Activated T-helper 2 cell treated with anti-CD3 and anti-CD28 coated beads, Interferon-gamma antibody, Interleukin-2, Interleukin-4, amounts not matched to agents 10 μg/mL and 5 μg/mL and 100 μg/mL, durations not matched to agents 14 hours and 24 hours and 36 hours (primary cell): ENCODE measurements at regions of chr16 and their contacts with region 1.

Region 1: GRCh38 chr16:25014500-25015147 is 545 bp downstream of the ARHGAP17 start:
- DNase-seq: no peak
- H3K4me3 Mint-ChIP-seq: peak overlapping the region; percentile 93
- H3K27ac Mint-ChIP-seq: peak overlapping the region; percentile 90
- H3K4me1 Mint-ChIP-seq: peaks cover 65% of the 10 kb centered on the region
- H3K27me3 Mint-ChIP-seq: no peaks in the 10 kb centered on the region

Region 2: DNA sequence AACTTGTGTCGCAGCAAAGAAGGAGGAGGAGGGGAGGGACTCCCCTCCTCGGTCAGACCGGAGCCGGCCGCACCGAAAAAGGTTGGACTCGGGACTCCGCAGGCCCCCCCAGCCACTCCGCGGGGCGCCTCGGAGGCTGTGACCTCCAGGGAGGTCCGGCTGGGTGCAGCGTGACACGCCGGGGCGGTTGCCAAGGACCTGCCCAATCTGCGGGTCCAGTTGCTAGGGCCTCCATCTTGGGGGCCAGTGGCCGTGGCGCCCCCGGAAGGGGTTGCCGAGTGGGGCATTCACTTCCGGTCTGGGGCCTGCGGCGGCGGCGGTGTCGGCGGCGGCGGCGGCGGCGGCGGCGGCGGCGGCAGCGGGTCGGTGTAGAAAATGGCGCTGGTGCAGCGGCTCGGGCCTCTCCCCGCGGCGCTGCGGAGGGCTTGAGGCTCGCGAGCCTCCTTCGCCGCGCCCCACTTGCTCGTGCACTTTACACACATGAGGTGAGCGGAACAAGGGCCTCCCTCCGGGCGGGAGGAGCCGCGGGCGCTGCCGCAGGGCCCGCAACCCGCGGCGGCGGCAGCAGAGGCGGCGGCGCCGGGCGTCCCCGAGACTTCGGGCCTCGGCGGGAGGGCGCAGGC is 285.2 kb before region 1 on chr16 and contains the start of gene TNRC6A:
- intact Hi-C with region 1: loop called (anchors 10 kb)
- DNase-seq: peak; percentile 74
- H3K4me3 Mint-ChIP-seq: peak within 1 kb of the TSS; percentile 98
- H3K27ac Mint-ChIP-seq: peak within 1 kb of the TSS; percentile 97
- H3K4me1 Mint-ChIP-seq: peaks cover 36% of the 10 kb centered on the region
- H3K27me3 Mint-ChIP-seq: peaks cover 3% of the 10 kb centered on the region
- total RNA-seq, gene TNRC6A: 47.3 and 50.3 TPM in 2 replicates

Region 3: DNA sequence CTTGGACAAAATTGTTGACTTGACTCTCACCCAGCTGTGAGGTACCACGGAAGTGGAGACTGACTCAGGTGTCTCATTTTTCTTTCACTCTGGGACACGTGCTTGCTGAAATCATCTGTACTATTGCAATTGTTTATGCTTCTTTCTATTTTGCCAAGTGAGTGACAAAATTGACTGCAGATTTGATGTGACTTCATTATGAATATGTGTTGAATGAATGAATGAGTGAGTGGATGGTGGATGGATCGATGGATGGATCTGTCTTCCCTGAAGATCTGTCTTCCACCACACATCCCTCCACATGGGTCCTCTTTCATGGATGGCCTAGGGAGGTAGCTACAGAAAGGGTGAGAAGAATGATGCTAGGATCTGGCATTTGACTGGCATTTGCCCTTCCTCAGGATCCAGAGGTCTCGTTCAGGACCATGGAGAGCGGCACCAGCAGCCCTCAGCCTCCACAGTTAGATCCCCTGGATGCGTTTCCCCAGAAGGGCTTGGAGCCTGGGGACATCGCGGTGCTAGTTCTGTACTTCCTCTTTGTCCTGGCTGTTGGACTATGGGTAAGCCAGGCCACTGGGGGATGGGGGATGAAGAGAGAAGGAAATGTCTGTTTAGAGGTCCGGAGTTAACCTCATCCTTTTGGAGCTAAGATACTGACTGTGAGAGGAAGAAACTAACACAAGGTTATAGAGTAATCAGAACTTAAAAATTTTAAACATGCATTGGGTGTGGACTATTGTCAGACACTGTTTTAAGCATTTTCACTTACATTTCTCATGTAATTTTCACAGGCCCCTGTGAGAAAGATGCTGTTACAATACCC is 156.2 kb before region 1 on chr16:
- intact Hi-C with region 1: loop called (anchors 10 kb)
- DNase-seq: peak; percentile 38
- H3K4me3 Mint-ChIP-seq: no peak overlapping the region
- H3K27ac Mint-ChIP-seq: no peak overlapping the region
- H3K4me1 Mint-ChIP-seq: no peaks in the 10 kb centered on the region
- H3K27me3 Mint-ChIP-seq: peaks cover 2% of the 10 kb centered on the region

Region 4: DNA sequence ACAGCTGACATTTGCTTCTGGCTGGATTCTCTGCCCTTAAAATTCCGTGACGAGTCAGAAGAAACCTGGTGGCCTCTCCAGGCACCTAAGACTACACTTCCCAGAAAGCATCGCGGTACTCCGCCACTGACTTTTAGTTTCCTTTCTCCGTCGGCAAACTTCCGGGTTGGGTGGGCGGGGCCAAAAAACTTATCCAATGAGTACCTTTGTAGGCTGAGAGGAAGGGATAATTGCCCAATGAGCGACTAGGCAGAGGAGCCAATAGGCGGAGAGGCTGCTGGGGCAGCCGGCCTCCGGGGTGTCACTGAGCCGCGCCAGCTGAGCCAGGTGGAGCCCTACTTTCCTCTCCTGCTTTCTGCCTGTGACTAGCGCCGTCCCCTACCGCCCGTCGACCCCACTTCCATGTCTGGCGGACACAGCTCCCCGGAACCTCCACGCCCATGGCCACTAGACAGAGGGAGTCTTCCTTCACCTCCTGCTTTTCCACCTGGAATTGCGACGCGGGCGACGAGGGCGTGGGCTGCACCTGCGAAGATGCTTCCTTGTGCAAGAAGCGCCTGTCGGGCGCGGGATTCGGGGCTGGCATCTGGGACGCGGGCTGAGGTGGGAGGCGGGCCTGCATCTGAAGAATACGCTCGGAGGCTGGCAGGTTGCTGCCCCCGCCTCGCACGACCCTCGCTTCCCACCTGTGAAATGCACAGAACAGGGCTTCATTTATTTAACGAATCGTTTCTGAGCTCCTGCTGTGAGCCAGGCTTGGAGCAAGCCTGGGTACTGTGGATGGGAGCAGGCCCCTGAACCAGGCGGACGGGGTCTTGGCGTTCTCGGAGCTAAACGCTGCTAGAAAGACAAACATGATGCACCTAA is 17.1 kb after region 1 on chr16:
- intact Hi-C with region 1: loop called (anchors 1 kb)
- DNase-seq: peak; percentile 89
- H3K4me3 Mint-ChIP-seq: peak overlapping the region; percentile 92
- H3K27ac Mint-ChIP-seq: peak overlapping the region; percentile 99
- H3K4me1 Mint-ChIP-seq: peaks cover 30% of the 10 kb centered on the region
- H3K27me3 Mint-ChIP-seq: no peaks in the 10 kb centered on the region

Region 5: GRCh38 chr16:25060920-25061319 is 46.3 kb after region 1 on chr16:
- intact Hi-C with region 1: no loop called
- DNase-seq: no peak
- H3K4me3 Mint-ChIP-seq: no peak overlapping the region
- H3K27ac Mint-ChIP-seq: peak overlapping the region; percentile 72
- H3K4me1 Mint-ChIP-seq: peaks cover 42% of the 10 kb centered on the region
- H3K27me3 Mint-ChIP-seq: no peaks in the 10 kb centered on the region